ENCODE measurements at regions of chr12 and their contacts with region 1.

Region 1: GRCh38 chr12:95633049-95633545 is 81.8 kb upstream of the USP44 start:
- DNase-seq: peak; percentile 98
- H3K4me3 Mint-ChIP-seq: peak overlapping the region; percentile 41
- H3K27ac Mint-ChIP-seq: peak overlapping the region; percentile 91
- H3K4me1 Mint-ChIP-seq: peaks cover 28% of the 10 kb centered on the region
- H3K27me3 Mint-ChIP-seq: no peaks in the 10 kb centered on the region
- CTCF ChIP-seq: no peak

Region 2: DNA sequence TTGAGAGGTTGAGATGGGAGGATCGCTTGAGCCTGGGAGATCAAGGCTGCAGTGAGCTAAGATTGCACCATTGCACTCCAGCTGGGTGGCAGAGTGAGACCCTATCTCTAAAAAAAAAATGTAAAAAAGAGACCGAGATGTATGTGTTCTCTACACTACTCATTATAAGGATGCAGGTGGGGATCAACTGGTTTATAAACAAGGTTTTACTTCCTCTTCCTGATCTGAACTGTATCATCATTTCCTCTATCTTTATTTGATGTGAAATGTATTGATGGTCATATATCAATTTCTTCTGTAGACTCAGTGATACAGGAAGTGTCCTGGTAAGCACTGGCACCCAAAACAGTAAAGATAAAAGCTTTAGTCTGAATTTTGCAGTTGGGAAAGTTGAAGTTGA is 61.7 kb before region 1 on chr12:
- CTCF ChIA-PET with region 1: no interaction called
- POLR2A ChIA-PET with region 1: no interaction called
- intact Hi-C with region 1: no loop called
- DNase-seq: no peak
- H3K4me3 Mint-ChIP-seq: no peak overlapping the region
- H3K27ac Mint-ChIP-seq: no peak overlapping the region
- H3K4me1 Mint-ChIP-seq: no peaks in the 10 kb centered on the region
- H3K27me3 Mint-ChIP-seq: no peaks in the 10 kb centered on the region
- CTCF ChIP-seq: no peak

Region 3: DNA sequence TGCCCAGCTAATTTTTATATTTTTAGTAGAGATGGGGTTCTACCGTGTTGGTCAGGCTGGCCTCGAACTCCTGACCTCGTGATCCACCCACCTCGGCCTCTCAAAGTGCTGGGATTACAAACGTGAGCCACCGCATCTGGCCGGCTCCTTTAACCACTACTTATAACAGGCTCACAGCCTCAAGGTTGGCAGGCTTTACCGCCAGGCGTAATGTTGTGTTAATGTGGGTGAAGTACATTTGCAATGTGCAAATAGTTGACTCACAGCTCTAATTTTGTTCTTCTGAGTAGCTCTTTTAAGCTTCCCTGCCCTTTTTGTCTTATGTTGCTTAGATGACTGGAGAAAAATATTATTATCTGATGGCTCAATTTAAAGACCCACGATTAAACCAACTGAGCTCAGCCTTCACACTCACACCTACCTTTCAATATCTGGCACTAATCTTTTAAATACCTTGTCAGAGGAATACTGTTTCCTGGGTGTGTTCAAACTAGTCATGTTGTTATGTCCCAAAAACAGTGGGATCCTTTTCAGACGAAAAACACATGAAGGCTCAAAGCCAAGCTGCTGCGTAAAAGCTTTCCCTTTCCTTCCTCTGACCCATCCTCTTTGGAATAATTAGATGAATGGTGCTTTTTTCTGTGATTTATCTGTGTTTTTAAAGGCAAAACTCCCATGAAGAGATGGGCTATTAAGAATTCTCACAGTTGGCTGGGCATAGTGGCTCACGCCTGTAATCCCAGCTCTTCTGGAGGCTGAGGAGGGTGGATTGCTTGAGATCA is 24.7 kb before region 1 on chr12:
- CTCF ChIA-PET with region 1: interaction called, 5 read pairs
- POLR2A ChIA-PET with region 1: interaction called, 12 read pairs
- intact Hi-C with region 1: no loop called
- DNase-seq: peak; percentile 83
- H3K4me3 Mint-ChIP-seq: peak overlapping the region; percentile 24
- H3K27ac Mint-ChIP-seq: peak overlapping the region; percentile 94
- H3K4me1 Mint-ChIP-seq: peaks cover 20% of the 10 kb centered on the region
- H3K27me3 Mint-ChIP-seq: no peaks in the 10 kb centered on the region
- CTCF ChIP-seq: no peak

Region 4: GRCh38 chr12:95649375-95649791 is 16.3 kb after region 1 on chr12:
- CTCF ChIA-PET with region 1: interaction called, 3 read pairs
- POLR2A ChIA-PET with region 1: interaction called, 40 read pairs
- intact Hi-C with region 1: no loop called
- DNase-seq: peak; percentile 90
- H3K4me3 Mint-ChIP-seq: no peak overlapping the region
- H3K27ac Mint-ChIP-seq: peak overlapping the region; percentile 79
- H3K4me1 Mint-ChIP-seq: peaks cover 34% of the 10 kb centered on the region
- H3K27me3 Mint-ChIP-seq: no peaks in the 10 kb centered on the region
- CTCF ChIP-seq: no peak

Measured in MCF 10A (cell line).